Panc1 (cell line): ENCODE measurements at regions of chr15 and their contacts with region 1.

Region 1: GRCh38 chr15:99076552-99077308 is 28.1 kb upstream of the SYNM start:
- DNase-seq: peak; percentile 83
- ATAC-seq: peak; percentile 96
- H3K4me3 ChIP-seq: peak overlapping the region; percentile 24 to 46
- H3K27ac ChIP-seq: peak overlapping the region; percentile 72
- H3K4me1 ChIP-seq: 0 out of 2 replicates have a peak, but pooled peaks cover 5% of the 10 kb centered on the region
- H3K27me3 ChIP-seq: no peaks in the 10 kb centered on the region
- CTCF ChIP-seq: peak; percentile 90

Region 2: DNA sequence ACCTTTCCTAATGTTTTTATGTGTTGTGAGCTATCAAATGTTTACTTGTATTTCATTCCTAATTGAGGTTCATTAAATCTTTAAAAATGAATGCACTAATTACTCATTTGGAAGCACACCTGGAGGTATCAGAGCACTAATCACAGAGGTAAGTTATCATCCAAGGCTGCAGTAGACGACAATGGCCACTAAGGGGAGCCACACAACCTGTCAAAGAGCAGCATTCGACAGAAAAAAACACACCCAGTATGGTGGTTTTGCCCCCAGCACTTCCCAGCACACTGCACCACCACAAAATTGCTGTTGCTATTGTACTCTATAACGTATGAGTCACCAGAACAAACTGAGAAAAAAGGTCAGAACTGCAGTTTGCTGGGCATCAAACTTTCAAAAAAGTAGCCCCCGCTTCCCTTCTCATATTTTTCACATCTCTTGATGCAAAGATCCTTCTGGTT is 634.3 kb before region 1 on chr15:
- CTCF ChIA-PET with region 1: no interaction called
- POLR2A ChIA-PET with region 1: no interaction called
- in situ Hi-C with region 1: no loop called
- intact Hi-C with region 1: loop called (anchors 5 kb)
- DNase-seq: peak; percentile 36
- ATAC-seq: peak; percentile 81
- H3K4me3 ChIP-seq: no peak overlapping the region
- H3K27ac ChIP-seq: no peak overlapping the region
- H3K4me1 ChIP-seq: peaks cover 8% of the 10 kb centered on the region
- H3K27me3 ChIP-seq: no peaks in the 10 kb centered on the region
- CTCF ChIP-seq: peak; percentile 92

Region 3: DNA sequence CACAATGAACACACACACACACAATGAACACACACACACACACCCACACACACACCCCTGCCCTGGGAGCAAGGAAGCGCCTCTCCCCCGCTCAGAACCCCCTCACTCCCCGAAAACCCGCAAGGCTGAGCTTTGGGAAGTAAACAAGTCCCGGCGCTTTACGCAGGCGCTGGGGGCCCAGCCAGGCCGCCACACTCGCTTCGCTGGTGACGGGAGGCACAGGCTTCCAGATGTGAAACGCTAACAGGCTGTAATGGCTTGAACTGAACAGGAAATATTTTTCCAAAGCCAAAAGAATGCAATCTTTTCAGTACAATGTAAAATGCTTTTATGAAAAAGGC is 551.1 kb before region 1 on chr15:
- CTCF ChIA-PET with region 1: no interaction called
- POLR2A ChIA-PET with region 1: no interaction called
- in situ Hi-C with region 1: no loop called
- intact Hi-C with region 1: loop called (anchors 5 kb)
- DNase-seq: no peak
- ATAC-seq: no peak
- H3K4me3 ChIP-seq: no peak overlapping the region
- H3K27ac ChIP-seq: no peak overlapping the region
- H3K4me1 ChIP-seq: no peaks in the 10 kb centered on the region
- H3K27me3 ChIP-seq: peaks cover 8% of the 10 kb centered on the region; the same call in 1 of the 2 replicates
- CTCF ChIP-seq: no peak

Region 4: DNA sequence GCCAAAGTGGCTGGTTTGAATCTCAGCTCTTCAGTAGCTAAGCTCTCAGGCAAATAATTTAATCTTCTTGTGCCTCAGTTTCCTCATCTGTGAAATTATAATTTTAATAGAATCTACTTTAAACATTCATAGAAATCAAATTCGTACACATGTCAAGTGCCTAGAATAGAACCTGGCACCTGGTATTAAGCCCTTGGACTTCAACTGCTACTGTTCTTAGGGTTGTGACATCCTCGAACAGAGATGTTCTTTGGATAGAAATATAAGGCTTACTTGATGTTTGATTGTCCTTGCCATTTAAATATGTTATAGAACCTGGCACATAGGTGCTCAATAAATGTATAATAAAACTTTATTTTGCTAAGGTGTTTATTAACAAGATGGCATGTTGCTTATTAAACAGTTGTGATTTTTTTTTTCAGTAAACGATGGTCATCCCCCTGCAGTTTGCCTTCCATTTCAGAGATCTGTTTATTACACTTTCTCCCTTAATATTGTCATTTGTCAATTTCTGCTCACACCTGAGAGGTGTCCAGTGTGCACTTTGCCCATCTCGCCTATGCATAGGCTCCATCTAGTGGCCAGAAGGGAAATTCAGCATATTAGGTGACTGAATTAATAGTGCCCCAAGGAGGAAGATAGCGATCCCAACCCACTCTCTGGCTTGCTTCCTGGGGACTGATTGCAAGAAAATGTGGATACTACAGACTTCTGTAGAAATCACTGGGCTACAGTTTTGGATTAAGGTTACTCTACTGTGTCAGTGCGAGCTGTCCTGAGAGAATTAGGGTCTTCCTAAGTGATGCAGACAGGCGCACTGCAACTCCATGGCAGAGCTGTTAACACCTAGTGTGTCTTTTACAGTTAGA is 417.7 kb before region 1 on chr15:
- CTCF ChIA-PET with region 1: no interaction called
- POLR2A ChIA-PET with region 1: no interaction called
- in situ Hi-C with region 1: no loop called
- intact Hi-C with region 1: loop called (anchors 10 kb)
- DNase-seq: peak; percentile 39
- ATAC-seq: peak; percentile 90
- H3K4me3 ChIP-seq: 0 out of 4 replicates have a peak overlapping the region, but pooled peaks of 1 of the 2 experiments have one; percentile 8
- H3K27ac ChIP-seq: peak overlapping the region; percentile 13; the same call in 1 of the 2 replicates
- H3K4me1 ChIP-seq: peaks cover 57% of the 10 kb centered on the region
- H3K27me3 ChIP-seq: no peaks in the 10 kb centered on the region
- CTCF ChIP-seq: peak; percentile 95

Region 5: DNA sequence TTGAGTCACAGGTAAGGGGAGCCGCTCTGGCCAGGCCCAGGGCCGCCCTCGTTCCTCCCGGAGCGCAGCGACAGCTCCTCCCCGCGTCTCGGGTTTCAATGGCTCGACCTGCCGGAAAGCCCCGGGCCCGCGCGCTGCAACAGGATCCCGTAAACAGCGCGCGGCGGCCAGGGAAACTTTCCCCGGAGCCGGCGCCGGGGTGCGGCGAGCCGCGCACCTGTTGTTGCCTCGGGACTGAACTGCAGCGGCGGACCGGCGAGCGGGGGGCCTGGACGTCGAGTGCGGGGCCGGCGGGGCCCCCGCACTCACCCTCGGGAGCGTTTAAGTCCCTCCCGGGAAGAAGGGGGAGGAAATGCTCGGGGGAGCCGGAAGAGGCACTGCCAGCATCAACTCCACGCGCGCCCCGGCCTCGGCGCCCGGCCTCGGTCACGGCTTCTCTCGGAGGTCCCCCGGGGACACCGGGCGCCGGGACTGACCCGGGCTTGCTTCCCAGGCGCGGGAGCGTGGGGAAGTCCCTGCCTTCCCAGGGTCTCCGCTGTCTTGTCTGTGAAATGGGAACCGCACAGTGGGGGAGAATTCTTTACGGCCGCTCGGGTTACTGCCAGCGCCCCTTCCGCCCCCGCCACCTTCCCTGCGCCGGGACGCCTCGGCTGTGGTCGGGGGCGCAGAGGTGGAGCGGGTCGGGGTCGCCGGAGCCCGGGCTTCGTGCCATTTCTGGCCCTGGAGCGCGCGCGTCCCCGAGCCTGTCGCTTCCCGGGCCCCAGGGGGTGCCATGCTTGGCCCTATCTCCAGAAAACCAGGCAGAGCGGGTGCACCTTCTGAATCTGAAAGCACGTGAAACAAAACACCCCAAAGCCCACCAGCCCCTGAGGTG is 61.7 kb before region 1 on chr15:
- CTCF ChIA-PET with region 1: no interaction called
- POLR2A ChIA-PET with region 1: no interaction called
- in situ Hi-C with region 1: no loop called
- intact Hi-C with region 1: no loop called
- DNase-seq: no peak
- ATAC-seq: peak; percentile 92
- H3K4me3 ChIP-seq: peak overlapping the region; percentile 64 to 65
- H3K27ac ChIP-seq: peak overlapping the region; percentile 81
- H3K4me1 ChIP-seq: peaks cover 13% of the 10 kb centered on the region
- H3K27me3 ChIP-seq: no peaks in the 10 kb centered on the region
- CTCF ChIP-seq: no peak